AG04449 (cell line): ENCODE measurements at regions of chr14 and their contacts with region 1.

Region 1: DNA sequence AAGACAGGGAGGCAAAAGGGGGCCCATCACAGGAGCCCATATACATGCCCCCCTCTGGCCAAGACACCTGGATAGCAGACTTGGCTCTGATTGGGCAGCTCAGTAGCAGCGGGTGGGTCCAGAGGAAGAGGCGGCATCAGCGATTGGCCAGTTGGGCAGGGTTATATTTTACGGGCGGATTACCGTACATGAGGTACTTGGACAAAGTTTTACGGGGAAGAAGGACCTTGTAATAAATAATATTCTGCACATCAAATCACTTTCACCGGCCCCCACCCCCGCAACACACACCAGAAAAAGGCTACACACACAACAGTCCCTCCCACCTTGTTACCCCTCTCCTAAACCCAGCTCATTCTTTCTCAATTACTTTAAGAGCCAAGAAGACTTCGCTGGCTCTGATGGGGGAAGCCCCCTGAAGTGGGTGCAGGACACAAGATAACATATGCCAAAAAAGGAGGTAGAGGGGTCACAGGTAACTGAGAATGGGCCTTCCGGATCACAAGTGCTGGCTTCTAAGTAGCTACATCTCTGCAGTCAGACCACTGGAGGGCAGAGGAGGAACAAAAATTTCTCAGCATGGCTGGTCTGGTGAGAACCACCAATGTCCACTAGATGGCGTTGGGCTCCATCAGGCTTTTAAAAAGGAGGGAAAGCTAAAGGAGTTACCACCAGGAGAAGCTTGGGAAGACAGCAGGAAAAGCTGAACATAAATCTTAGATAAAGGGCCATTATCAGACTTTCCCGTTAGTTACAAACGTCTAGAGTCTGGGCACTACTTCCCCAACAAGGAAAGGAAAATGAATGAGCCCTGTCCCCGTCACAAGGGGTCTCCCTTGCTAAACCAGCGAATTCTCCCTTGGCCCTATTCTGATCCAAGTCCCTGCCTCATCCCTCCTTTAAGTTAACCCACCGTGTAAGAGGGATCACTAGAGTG is 11.4 kb upstream of the CDH24 start:
- DNase-seq: peak; percentile 61
- H3K4me3 ChIP-seq: peak overlapping the region; percentile 39
- CTCF ChIP-seq: peak; percentile 92

Region 2: GRCh38 chr14:22929104-22929847 is 139.5 kb before region 1 on chr14 and contains the start of gene PRMT5:
- CTCF ChIA-PET with region 1: interaction called, 13 read pairs
- POLR2A ChIA-PET with region 1: no interaction called
- DNase-seq: peak; percentile 99
- H3K4me3 ChIP-seq: peak within 1 kb of the TSS; percentile 100
- CTCF ChIP-seq: no peak

Region 3: GRCh38 chr14:23006544-23007419 is 62.0 kb before region 1 on chr14:
- CTCF ChIA-PET with region 1: interaction called, 1,423 read pairs
- POLR2A ChIA-PET with region 1: no interaction called
- DNase-seq: peak; percentile 86
- H3K4me3 ChIP-seq: peak overlapping the region; percentile 70
- CTCF ChIP-seq: peak; percentile 54

Region 4: GRCh38 chr14:23057757-23058653 is 10.7 kb before region 1 on chr14:
- CTCF ChIA-PET with region 1: interaction called, 452 read pairs
- POLR2A ChIA-PET with region 1: interaction called, 10 read pairs
- DNase-seq: no peak
- H3K4me3 ChIP-seq: peak overlapping the region; percentile 60
- CTCF ChIP-seq: peak; percentile 94

Region 5: DNA sequence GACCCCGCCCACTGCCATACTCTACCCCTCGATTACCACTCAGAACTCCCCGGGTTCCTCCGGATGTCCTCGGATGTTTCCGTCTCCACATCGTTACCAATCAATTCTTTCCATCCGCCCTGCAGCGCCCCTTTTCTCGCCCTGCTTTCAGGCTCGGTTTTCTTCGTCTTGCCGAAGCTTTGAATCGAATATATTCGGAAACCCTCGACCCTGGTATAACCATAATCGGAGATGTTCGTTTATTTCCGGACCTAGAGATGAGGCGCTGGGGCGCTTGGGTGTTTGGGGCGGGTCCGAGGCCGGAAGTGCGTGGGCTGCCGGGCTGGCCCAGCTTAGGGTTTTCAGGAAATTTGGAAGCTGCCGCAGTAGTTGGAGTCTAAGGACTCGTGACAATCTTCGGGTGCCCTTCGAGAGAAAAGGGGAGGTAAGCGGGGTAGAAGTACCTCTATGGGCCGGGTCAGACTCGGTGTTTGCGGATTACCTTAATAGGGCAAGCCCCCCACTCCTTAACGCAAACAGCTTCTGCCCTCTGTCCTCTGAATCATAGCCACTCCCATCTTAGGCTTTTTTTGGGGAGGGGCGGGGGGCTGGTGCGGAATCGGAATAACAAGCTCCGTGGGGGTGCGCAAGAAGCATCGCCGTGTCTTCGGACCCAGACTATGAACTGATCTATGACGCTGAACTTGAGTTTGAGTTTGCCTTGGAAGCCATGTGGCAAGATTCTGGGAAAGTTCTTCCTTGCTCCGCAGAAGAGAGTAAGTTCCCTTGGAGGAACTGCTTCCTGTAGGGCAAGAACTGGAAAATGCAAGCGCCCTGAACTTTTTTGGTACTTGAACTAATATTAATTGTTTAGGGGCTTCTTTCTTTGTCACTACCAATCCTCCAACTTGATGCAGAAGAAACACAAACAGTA is 26.7 kb after region 1 on chr14 and contains the start of gene C14orf119:
- CTCF ChIA-PET with region 1: interaction called, 96 read pairs
- POLR2A ChIA-PET with region 1: interaction called, 29 read pairs
- DNase-seq: peak; percentile 95
- H3K4me3 ChIP-seq: peak within 1 kb of the TSS; percentile 100
- CTCF ChIP-seq: no peak

Region 6: DNA sequence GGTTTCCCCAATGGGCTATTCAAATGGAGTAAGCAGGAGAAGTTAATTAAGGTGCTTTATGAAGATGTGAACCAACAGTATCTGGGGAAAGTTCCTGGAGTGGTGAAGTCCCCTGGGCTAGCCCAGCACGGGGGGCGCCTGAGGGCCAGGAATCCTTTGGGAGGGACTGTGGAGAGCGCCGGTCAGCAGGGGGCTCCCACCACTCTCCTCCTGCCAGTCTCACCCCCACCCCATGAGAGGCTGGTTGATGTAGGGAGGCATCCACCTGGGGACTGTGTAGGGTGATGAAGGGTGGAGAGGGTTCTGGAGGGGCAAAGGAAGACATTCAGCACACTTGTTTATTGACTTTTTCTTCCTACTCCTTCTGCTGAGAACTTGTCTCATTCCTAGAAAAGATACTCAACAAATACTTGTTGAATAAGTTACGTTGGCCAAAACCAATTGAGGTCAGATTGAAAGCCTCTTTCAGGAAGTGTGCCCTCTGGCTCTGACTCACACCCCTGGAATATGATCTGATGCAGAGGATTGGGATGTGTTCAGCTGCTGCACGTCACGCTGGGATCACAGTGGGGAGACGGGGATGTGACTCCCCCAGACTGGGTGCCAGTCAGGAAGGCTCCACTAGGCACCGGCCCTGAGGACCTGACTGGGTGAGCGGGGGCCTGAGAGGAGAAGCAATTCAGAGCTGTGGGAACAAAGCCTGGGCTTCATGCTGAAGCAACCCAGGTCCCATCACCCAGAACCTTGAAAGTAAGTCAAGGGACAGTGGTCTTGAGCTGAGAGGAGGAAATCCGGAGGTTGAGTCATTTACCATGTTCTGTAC is 46.1 kb after region 1 on chr14:
- CTCF ChIA-PET with region 1: interaction called, 256 read pairs
- POLR2A ChIA-PET with region 1: interaction called, 4 read pairs
- DNase-seq: peak; percentile 97
- H3K4me3 ChIP-seq: 0 out of 2 replicates have a peak overlapping the region, but pooled peaks have one; percentile 20
- CTCF ChIP-seq: peak; percentile 7

Region 7: DNA sequence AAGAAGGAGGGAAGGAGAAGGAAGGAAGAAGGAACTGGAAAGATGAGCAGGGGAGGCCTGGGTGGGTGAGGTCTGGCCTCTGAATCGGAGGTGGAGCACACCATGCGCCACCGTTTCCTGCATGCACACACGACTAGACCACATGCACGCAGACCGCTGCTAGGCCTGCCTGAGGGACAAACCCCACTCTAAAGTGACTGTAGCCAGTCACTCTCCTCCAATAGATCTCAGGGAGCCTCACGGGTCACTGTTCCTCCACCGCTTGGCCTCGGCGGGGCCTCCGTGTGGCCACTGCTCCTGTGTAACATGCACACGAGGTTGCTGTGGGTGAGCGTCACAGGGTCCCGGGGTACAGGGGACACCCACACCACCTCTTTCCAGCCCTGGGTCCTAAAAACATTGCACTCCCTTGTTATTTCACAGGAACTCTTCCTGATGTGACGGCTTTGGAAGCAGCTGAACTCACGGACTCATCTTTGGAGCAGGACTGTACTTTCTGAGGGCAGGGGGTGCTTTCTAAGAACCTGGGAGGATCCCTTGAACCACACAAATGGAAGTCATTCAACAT is 67.9 kb after region 1 on chr14:
- CTCF ChIA-PET with region 1: no interaction called
- POLR2A ChIA-PET with region 1: no interaction called
- DNase-seq: no peak
- H3K4me3 ChIP-seq: no peak overlapping the region
- CTCF ChIP-seq: no peak

Region 8: DNA sequence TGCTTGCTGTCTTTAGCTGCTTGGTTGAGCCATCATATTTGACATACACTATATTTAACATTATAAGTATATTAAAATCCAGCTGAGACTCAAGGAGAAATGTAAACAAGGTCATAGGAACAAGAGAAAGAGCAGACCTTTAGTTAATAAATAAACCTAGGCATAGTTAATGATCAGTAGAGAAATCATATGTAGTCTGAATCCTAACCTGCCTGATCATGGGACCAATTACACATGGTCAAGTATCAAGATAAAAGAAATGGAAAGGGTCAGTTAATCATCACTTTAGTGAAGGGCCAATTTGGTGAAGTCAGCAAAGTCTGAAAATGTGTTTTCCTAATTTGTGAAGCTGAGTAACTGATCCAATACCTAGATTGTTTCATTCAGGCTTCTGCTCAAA is 176.5 kb after region 1 on chr14:
- CTCF ChIA-PET with region 1: no interaction called
- POLR2A ChIA-PET with region 1: no interaction called
- DNase-seq: no peak
- H3K4me3 ChIP-seq: no peak overlapping the region
- CTCF ChIP-seq: no peak

Region 9: GRCh38 chr14:23352511-23353432 is 284.0 kb after region 1 on chr14 and contains the start of gene SLC22A17:
- CTCF ChIA-PET with region 1: no interaction called
- POLR2A ChIA-PET with region 1: no interaction called
- DNase-seq: peak; percentile 59
- H3K4me3 ChIP-seq: peak within 1 kb of the TSS; percentile 87
- CTCF ChIP-seq: peak; percentile 10

Region 10: DNA sequence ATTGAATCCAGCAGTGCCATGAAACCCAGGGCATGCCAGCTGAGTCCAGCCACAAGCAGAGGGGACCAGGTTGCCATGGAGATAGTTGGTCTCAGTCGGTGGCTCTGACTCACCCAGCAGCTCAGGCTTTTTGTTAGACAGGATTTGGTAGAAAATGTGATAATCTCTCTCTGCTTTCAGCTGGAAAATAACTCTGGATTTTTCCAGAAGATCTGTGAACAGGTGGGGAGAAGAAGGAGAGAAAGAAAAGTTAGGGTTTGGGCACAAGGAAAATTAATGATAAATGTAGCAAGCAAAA is 362.0 kb after region 1 on chr14:
- CTCF ChIA-PET with region 1: no interaction called
- POLR2A ChIA-PET with region 1: no interaction called
- DNase-seq: no peak
- H3K4me3 ChIP-seq: no peak overlapping the region
- CTCF ChIP-seq: no peak